Dorsolateral prefrontal cortex (tissue), 120 donors: ENCODE measurements at regions of chr12 and their contacts with region 1.

Region 1: DNA sequence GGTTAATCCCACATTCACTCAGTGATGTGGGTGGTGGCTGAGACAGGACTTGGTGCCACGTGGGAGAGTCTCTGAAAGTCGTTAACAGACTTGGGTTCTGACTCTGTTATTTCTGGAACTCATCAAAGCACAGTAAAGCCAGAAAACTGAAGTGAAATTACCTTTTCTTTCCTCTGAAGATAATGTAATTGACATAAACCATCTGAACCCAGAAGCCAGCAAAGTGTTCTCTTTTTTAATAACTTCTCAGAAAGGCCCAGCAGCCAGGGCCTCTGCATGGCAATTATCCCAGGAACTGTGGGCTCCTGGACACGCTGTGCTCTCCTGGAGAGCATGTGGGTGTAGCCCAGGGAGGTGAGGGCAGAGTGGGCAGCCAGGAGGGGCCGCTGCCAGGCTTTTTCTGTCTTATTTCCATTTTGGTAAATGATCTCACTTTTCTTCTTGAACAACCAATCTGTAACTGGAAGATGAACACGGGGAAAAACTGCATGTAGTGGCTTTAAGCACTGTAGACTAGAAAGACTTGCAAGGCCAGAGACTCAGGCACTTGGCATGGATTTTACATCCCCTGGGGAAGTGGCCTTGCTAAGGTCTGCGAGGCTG is 444.1 kb upstream of the TMEM132C start:
- DNase-seq: peak in 7 of 10 donors; percentile 42 to 76 (median 68)
- H3K4me3 ChIP-seq: no peak overlapping the region
- H3K27ac ChIP-seq: peak overlapping the region in 56 of 59 donors; percentile 38 to 90 (median 72)
- H3K27me3 ChIP-seq: no peaks in the 10 kb centered on the region
- CTCF ChIP-seq: no peak

Region 2: GRCh38 chr12:127703026-127703425 is 119.9 kb before region 1 on chr12:
- intact Hi-C with region 1: no loop called
- DNase-seq: no peak
- H3K4me3 ChIP-seq: no peak overlapping the region
- H3K27ac ChIP-seq: no peak overlapping the region
- H3K27me3 ChIP-seq: no peaks in the 10 kb centered on the region
- CTCF ChIP-seq: no peak

Region 3: DNA sequence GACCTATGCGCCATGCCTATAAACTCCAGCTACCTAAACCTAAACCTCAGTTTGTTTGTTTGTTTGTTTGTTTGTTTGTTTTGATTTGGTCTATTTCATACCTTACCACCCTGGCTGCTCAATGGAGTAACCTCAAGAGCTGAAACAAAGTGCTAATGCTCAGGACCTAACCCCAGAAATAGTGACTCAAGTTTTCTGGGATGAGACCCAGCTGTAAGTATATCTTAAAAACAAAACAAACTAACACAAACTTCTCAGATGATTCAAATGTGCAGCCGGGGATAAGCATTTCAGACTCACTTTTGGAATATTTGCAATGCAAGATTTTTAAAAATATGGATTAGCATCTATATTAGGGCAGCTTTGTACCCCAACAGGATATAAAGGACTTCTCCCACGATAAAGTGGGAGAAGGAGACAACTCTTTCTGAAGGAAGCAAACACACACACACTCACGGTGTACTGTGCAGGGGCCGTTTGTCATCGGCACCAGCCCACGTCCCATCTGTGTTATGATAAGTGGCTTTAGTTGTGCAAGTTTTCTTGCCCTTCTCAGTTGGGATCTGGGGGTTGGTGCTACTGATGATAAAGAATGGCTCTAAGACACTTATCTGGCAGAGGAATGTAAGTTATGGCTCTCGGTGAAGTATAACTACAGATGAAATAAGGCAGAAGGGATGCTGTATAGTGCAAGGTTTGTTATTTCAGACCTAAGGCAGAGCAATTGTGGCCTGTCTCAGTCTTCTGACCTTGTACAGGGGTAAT is 72.7 kb before region 1 on chr12:
- intact Hi-C with region 1: loop called in 1 of 2 experiments (anchors 5 kb)
- DNase-seq: peak in 4 of 10 donors; percentile 60 to 76 (median 67)
- H3K4me3 ChIP-seq: no peak overlapping the region
- H3K27ac ChIP-seq: peak overlapping the region in 26 of 59 donors; percentile 5 to 74 (median 39)
- H3K27me3 ChIP-seq: no peaks in the 10 kb centered on the region
- CTCF ChIP-seq: no peak

Region 4: GRCh38 chr12:127861406-127861805 is 38.5 kb after region 1 on chr12:
- intact Hi-C with region 1: no loop called
- DNase-seq: no peak
- H3K4me3 ChIP-seq: no peak overlapping the region
- H3K27ac ChIP-seq: peak overlapping the region in 6 of 59 donors; percentile 1 to 45 (median 18)
- H3K27me3 ChIP-seq: no peaks in the 10 kb centered on the region
- CTCF ChIP-seq: no peak

Region 5: GRCh38 chr12:127925971-127926370 is 103.1 kb after region 1 on chr12:
- intact Hi-C with region 1: loop called in 1 of 2 experiments (anchors 10 kb)
- DNase-seq: peak; percentile 38 to 77 (median 61)
- H3K4me3 ChIP-seq: peak overlapping the region in 1 of 59 donors; percentile 18
- H3K27ac ChIP-seq: peak overlapping the region in 48 of 59 donors; percentile 1 to 86 (median 54)
- H3K27me3 ChIP-seq: no peaks in the 10 kb centered on the region
- CTCF ChIP-seq: peak; percentile 40 to 89 (median 74)